ENCODE measurements at regions of chr17 and their contacts with region 1.

Region 1: GRCh38 chr17:45021607-45022287 is 29.7 kb downstream of the DCAKD start:
- DNase-seq: peak; percentile 41 to 62 (median 62)
- H3K4me3 ChIP-seq: peak overlapping the region in 2 of 3 experiments; percentile 20 to 66
- H3K4me3 Mint-ChIP-seq: peak overlapping the region; percentile 59 to 88
- H3K27ac ChIP-seq: no peak overlapping the region
- H3K27ac Mint-ChIP-seq: no peak overlapping the region
- H3K4me1 ChIP-seq: peaks cover 16 to 29% of the 10 kb centered on the region in 2 donors
- H3K4me1 Mint-ChIP-seq: peaks cover 29% of the 10 kb centered on the region
- H3K27me3 ChIP-seq: peaks cover 33 to 40% of the 10 kb centered on the region in 2 donors
- H3K27me3 Mint-ChIP-seq: peaks cover 37 to 44% (median 41%) of the 10 kb centered on the region in 3 donors
- CTCF ChIP-seq: peak; percentile 97

Region 2: DNA sequence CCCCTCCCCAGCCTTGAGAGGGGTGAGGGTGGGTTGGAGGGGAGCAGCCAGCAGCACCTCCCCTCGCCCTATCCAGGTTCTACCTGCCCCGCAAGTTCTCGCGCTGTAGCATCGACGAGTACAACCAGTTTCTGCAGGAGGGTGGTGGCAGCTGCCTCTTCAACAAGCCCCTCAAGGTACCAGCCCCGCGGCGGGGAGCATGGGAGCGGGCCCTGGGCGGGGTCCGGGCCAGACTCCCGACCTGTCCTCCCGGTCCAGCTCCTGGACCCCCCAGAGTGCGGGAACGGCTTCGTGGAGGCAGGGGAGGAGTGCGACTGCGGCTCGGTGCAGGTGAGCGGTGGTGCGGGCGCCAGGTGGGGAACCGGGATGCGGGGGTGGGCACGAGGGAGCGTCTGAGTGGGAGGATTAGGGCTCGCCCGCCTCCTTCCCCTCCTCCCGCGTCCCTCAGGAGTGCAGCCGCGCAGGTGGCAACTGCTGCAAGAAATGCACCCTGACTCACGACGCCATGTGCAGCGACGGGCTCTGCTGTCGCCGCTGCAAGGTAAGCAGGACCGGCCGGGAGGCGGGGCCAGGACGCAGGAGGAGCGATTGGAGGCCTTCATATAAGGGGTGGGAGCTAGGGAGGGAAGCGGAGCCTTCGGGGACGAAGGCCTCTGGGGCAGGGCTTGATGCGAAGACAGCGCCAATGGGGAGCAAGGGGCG is 246.5 kb before region 1 on chr17:
- intact Hi-C with region 1: loop called (anchors 2 to 5 kb)
- DNase-seq: peak; percentile 92 to 97 (median 92)
- H3K4me3 ChIP-seq: peak overlapping the region; percentile 38 to 88 (median 50)
- H3K4me3 Mint-ChIP-seq: peak overlapping the region; percentile 79 to 90
- H3K27ac ChIP-seq: no peak overlapping the region
- H3K27ac Mint-ChIP-seq: peak overlapping the region in 1 of 7 donors; percentile 37
- H3K4me1 ChIP-seq: peaks cover 30 to 40% of the 10 kb centered on the region in 2 donors
- H3K4me1 Mint-ChIP-seq: peaks cover 36% of the 10 kb centered on the region
- H3K27me3 ChIP-seq: peaks cover 0 to 21% of the 10 kb centered on the region in 2 donors
- H3K27me3 Mint-ChIP-seq: peaks cover 20 to 46% (median 34%) of the 10 kb centered on the region in 3 donors
- CTCF ChIP-seq: peak; percentile 56

Region 3: GRCh38 chr17:44919885-44920564 is 101.7 kb before region 1 on chr17:
- intact Hi-C with region 1: loop called (anchors 1 to 5 kb)
- DNase-seq: peak; percentile 55 to 70 (median 65)
- H3K4me3 ChIP-seq: no peak overlapping the region
- H3K4me3 Mint-ChIP-seq: no peak overlapping the region
- H3K27ac ChIP-seq: no peak overlapping the region
- H3K27ac Mint-ChIP-seq: no peak overlapping the region
- H3K4me1 ChIP-seq: peaks cover 15 to 18% of the 10 kb centered on the region in 2 donors
- H3K4me1 Mint-ChIP-seq: peaks cover 16% of the 10 kb centered on the region
- H3K27me3 ChIP-seq: peaks cover 6 to 15% of the 10 kb centered on the region in 2 donors
- H3K27me3 Mint-ChIP-seq: peaks cover 23 to 30% (median 25%) of the 10 kb centered on the region in 3 donors
- CTCF ChIP-seq: peak; percentile 78

Region 4: GRCh38 chr17:45073414-45074070 is 51.8 kb after region 1 on chr17:
- intact Hi-C with region 1: no loop called
- DNase-seq: no peak
- H3K4me3 ChIP-seq: no peak overlapping the region
- H3K4me3 Mint-ChIP-seq: no peak overlapping the region
- H3K27ac ChIP-seq: peak overlapping the region in 1 of 2 donors; percentile 65
- H3K27ac Mint-ChIP-seq: peak overlapping the region in 5 of 7 donors; percentile 33 to 77 (median 55)
- H3K4me1 ChIP-seq: peaks cover 41 to 48% of the 10 kb centered on the region in 2 donors
- H3K4me1 Mint-ChIP-seq: peaks cover 55% of the 10 kb centered on the region
- H3K27me3 ChIP-seq: no peaks in the 10 kb centered on the region
- H3K27me3 Mint-ChIP-seq: peaks cover 0 to 4% (median 0%) of the 10 kb centered on the region in 3 donors
- CTCF ChIP-seq: no peak

Measured in CD14-positive monocyte (primary cell).